ENCODE measurements at regions of chr4 and their contacts with region 1.

Region 1: GRCh38 chr4:38804654-38805295 is at the start of gene TLR1:
- DNase-seq: peak in 4 of 14 experiments; percentile 5 to 82 (median 78)
- ATAC-seq: peak; percentile 84
- H3K4me3 ChIP-seq: peak within 1 kb of the TSS; percentile 55
- H3K4me3 Mint-ChIP-seq: peak within 1 kb of the TSS; percentile 86
- H3K27ac ChIP-seq: peak within 1 kb of the TSS; percentile 42 to 54
- H3K27ac Mint-ChIP-seq: peak within 1 kb of the TSS; percentile 88
- H3K4me1 ChIP-seq: peaks cover 27% of the 10 kb centered on the region
- H3K4me1 Mint-ChIP-seq: peaks cover 41% of the 10 kb centered on the region
- H3K27me3 ChIP-seq: no peaks in the 10 kb centered on the region
- H3K27me3 Mint-ChIP-seq: no peaks in the 10 kb centered on the region
- CTCF ChIP-seq: peak; percentile 70
- total RNA-seq, gene TLR1: 16.2 to 16.3 TPM

Region 2: DNA sequence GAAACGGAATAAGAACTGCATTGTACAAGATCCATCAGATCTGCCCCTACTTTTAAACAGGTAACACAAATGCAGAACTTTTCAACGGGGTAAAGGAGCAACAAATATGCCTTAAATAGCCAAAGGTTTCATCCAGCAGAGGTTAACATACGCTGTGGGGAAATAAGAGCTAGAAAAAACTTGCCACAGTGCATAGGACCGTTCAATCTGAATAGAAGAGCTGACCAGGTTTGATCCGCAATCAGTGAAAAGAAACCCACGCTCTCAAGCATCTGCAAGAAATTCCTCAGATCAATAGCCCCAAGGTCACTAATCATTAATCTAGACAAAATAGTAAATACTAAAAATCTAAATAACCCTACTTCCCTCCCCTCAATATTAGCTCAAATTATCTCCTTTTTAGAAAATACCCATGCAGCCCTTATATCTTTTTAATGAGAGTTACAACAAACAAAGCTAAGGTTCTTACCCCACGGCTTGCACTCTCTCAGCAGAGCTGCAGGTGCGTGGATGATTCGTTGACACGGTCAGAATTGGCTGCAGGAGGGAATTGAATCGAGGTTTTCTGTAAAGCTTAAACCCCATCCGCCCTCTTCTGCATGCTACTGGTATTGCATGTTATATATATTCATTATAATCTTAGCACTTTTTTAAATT is 22.2 kb before region 1 on chr4 and contains the start of gene TLR10:
- CTCF ChIA-PET with region 1: interaction called, 18 read pairs
- POLR2A ChIA-PET with region 1: interaction called, 17 read pairs
- intact Hi-C with region 1: no loop called
- DNase-seq: peak in 7 of 14 experiments; percentile 14 to 75 (median 60)
- ATAC-seq: peak; percentile 77
- H3K4me3 ChIP-seq: no peak within 1 kb of the TSS
- H3K4me3 Mint-ChIP-seq: no peak within 1 kb of the TSS
- H3K27ac ChIP-seq: no peak within 1 kb of the TSS
- H3K27ac Mint-ChIP-seq: no peak within 1 kb of the TSS
- H3K4me1 ChIP-seq: peaks cover 4% of the 10 kb centered on the region
- H3K4me1 Mint-ChIP-seq: peaks cover 6% of the 10 kb centered on the region
- H3K27me3 ChIP-seq: no peaks in the 10 kb centered on the region
- H3K27me3 Mint-ChIP-seq: no peaks in the 10 kb centered on the region
- CTCF ChIP-seq: peak; percentile 78
- total RNA-seq, gene TLR10: not detected

Region 3: GRCh38 chr4:38856524-38857337 is 52.0 kb after region 1 on chr4 and contains the start of gene TLR6:
- CTCF ChIA-PET with region 1: interaction called, 7 read pairs
- POLR2A ChIA-PET with region 1: interaction called, 19 read pairs
- intact Hi-C with region 1: loop called in 1 of 2 experiments (anchors 2 kb)
- DNase-seq: peak in 13 of 14 experiments; percentile 31 to 87 (median 60)
- ATAC-seq: peak; percentile 80
- H3K4me3 ChIP-seq: peak within 1 kb of the TSS; percentile 50
- H3K4me3 Mint-ChIP-seq: peak within 1 kb of the TSS; percentile 69
- H3K27ac ChIP-seq: peak within 1 kb of the TSS; percentile 40 to 44
- H3K27ac Mint-ChIP-seq: peak within 1 kb of the TSS; percentile 78
- H3K4me1 ChIP-seq: peaks cover 18% of the 10 kb centered on the region
- H3K4me1 Mint-ChIP-seq: peaks cover 38% of the 10 kb centered on the region
- H3K27me3 ChIP-seq: no peaks in the 10 kb centered on the region
- H3K27me3 Mint-ChIP-seq: no peaks in the 10 kb centered on the region
- CTCF ChIP-seq: peak; percentile 92
- total RNA-seq, gene TLR6: 0.69 to 1.3 TPM